Right ventricle myocardium superior (tissue), 1 donor: ENCODE measurements at regions of chr17 and their contacts with region 1.

Region 1: GRCh38 chr17:49851387-49852291 is 3.8 kb upstream of the TAC4 start:
- DNase-seq: peak; percentile 88
- ATAC-seq: peak; percentile 88

Region 2: GRCh38 chr17:49575579-49576087 is 276.0 kb before region 1 on chr17 and contains the start of gene NXPH3:
- intact Hi-C with region 1: loop called (anchors 10 kb)
- DNase-seq: peak; percentile 83
- ATAC-seq: peak; percentile 75
- total RNA-seq, gene NXPH3: 3.7 TPM

Region 3: GRCh38 chr17:49707608-49708514 is 143.8 kb before region 1 on chr17 and contains the start of gene SLC35B1:
- intact Hi-C with region 1: loop called (anchors 5 kb)
- DNase-seq: peak; percentile 100
- ATAC-seq: peak; percentile 99
- total RNA-seq, gene SLC35B1: 53.3 TPM

Region 4: DNA sequence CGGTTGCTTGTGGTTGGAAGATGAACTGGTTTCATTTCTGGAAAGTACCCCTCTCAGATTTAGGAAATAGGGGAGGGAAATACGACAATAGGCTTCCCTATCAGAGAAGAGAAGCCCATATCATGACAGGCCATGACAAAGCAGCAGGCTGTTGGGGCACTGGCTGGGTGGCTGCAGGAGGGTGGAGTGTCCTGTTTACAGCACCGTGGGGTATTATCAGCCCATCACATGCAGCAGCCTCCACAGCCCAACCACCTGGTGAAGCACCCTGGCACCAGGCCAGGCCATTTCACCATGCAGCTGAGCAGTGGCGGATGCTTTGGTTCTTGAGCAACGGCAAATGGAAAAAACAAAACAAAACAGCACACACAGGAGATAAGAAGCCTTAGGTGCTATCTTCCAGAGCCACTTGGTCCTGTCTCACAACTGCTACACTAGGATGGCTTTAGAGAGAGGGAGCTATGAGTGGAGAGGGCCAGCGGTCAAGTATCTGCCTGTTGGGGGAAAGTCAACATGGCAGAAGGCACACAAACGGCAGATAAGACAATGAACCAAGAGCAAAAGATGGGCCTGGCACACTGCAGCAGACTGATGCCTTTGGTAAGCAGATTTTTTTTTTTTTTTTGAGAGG is 111.9 kb before region 1 on chr17:
- intact Hi-C with region 1: no loop called
- DNase-seq: peak; percentile 93
- ATAC-seq: peak; percentile 77

Region 5: DNA sequence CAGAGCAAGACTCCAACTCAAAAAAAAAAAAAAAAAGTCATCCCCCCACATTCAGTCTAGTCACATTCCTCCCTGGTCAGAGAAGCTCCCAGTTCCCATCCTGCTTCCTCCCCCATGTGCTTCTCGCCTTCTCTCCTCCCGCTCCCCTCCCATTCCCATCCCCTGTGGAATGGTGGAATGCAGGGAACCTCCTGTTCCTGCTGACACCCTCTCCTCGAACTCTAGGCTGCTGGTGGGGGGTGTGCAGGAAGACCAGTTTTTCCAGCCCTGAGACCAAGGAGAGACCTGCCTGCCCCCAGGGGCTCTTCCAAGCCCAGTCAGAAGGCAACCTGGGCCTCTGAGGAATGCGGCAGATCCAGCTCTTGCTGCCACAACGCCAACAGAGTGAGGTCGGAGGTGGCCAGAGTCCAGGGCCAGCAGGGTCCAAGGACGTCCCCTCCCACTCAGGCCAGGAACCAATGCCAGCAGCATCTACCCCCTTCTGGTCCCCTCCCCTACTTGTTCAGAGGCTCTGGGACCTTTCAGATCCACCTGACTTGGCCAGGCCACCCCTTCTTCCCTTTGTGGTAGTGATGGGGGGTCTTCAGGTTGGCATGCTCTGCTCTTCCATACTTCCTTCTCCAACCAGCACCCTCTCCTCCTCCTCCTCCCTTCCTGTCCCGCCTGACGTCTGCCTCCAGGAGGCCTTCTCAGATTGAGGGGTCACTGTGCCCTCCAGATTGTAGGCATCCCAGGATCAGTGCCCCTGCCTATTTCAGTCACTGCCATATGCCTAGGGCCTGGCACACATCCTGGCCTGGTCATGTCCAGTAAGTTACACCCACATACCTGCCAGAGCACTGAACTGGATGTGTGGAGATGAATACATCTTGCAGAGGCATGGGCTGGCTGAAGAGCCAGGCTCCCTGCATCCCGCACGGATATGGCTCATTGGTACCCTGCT is 35.7 kb after region 1 on chr17:
- intact Hi-C with region 1: no loop called
- DNase-seq: no peak
- ATAC-seq: no peak